ENCODE measurements at regions of chr9 and their contacts with region 1.

Region 1: DNA sequence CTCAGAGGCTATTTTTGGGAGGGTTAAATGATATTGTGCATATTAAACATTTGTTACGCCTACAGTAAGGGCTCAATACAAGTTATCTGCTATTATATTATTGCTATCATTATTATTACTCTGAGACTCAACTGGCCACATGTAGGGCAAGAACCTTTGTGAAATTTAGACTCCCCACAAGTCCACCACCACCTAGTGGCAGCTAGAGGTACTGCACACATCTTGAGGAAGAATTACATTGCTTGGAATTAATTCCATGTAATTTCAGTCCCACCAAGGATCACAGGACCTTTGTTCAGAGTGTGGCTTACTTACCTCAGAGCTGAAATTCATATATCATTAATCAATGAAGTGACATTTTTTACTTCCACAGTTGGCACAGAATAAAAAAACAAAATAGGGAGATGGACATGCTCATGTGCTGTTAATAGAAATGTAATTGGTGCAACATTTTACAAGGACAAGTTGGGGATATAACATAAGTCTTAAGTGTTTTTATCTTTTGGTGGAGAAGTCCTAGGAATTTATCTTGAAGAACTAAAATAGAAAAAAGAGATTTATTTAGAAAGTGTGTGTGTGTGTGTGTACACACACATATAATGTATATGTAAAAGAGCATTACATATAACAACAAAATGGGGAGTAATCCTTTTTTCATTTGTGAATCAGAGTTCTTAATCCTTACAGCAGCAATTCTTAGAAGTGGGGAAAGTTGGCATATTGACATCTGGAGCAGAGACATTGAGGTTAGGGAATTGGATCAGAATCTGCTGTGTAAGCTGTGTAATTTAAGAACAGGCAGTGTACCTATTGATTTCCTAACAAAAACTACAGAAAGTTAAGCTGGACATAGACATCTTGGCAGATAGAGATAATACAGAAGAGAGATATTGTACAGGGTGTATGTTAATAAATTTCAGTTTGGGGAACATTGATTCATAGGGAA is 11.2 kb downstream of the MSANTD3 start:
- DNase-seq: no peak
- H3K4me3 ChIP-seq: no peak overlapping the region
- CTCF ChIP-seq: peak; percentile 85

Region 2: DNA sequence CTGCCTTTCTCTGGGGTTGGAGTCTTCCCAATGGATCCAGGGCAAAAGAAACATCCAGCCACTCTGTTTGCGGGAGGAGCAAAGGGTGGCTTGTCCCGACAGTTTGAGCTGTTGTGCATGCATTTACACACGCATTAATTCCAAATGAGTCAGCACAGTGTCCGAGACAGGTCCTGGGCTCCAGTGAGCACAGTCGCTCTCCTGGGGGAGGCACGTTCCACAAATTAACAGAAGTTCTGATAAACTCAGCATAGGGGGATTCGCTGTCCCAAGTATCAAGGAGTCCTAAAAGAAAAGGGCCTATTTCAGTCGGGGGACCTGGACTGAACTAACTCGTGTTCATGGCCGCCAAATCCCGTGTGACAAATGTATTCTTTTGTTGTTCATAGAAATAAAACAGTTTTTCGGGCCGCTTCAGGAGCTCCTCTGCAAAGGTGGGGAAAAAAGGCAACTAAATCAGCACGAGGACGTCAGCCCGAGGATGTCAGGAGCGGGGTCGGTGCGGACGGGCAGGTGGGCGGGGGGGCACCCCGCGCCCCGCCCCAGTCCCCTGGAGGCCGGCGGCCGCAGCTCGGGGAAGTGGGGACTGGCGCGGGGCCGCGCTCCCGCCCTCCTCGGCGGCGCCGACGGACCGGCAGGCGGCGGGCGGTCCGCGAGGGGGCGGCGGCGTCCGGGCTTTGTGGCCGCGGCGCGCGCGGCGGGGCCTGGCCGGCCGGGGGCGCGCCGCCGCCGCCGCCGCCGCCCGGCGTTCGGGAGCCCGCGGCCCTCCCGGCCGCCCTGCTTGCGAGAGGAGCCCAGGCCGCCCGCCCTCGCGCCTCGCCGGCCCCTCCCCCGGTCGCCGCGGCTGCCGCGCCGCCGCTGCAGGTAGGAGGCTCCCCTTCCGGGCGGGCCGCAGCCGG is 11.4 kb before region 1 on chr9 and contains the start of gene MSANTD3:
- CTCF ChIA-PET with region 1: interaction called, 18 read pairs
- POLR2A ChIA-PET with region 1: no interaction called
- DNase-seq: no peak
- H3K4me3 ChIP-seq: peak within 1 kb of the TSS; percentile 76
- CTCF ChIP-seq: peak; percentile 2

Region 3: GRCh38 chr9:100455470-100455869 is 17.3 kb after region 1 on chr9:
- CTCF ChIA-PET with region 1: interaction called, 33 read pairs
- POLR2A ChIA-PET with region 1: interaction called, 3 read pairs
- DNase-seq: no peak
- H3K4me3 ChIP-seq: no peak overlapping the region
- CTCF ChIP-seq: no peak

Region 4: DNA sequence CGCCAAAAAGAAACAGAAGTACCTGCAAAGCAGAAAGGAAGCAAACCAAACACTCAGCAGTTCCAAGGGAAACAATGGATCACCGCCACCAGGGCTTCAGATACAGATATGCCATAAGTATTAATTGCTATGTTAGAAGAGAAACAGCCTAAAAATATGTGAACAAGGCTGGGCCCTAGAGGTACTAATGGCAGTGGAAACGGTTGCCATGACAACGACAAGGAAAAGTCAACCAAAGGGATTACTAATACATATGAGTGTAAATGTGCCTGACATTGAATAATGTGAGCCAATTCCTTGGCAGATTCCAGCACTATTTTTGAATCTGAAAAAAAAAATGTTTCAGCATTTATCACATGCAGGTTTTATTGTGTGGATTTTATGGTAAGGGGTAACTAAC is 214.7 kb after region 1 on chr9:
- CTCF ChIA-PET with region 1: no interaction called
- POLR2A ChIA-PET with region 1: no interaction called
- DNase-seq: no peak
- H3K4me3 ChIP-seq: no peak overlapping the region
- CTCF ChIP-seq: no peak

Measured in AG04449 (cell line).